Head of caudate nucleus (tissue), 42 donors: ENCODE measurements at regions of chr1 and their contacts with region 1.

Region 1: DNA sequence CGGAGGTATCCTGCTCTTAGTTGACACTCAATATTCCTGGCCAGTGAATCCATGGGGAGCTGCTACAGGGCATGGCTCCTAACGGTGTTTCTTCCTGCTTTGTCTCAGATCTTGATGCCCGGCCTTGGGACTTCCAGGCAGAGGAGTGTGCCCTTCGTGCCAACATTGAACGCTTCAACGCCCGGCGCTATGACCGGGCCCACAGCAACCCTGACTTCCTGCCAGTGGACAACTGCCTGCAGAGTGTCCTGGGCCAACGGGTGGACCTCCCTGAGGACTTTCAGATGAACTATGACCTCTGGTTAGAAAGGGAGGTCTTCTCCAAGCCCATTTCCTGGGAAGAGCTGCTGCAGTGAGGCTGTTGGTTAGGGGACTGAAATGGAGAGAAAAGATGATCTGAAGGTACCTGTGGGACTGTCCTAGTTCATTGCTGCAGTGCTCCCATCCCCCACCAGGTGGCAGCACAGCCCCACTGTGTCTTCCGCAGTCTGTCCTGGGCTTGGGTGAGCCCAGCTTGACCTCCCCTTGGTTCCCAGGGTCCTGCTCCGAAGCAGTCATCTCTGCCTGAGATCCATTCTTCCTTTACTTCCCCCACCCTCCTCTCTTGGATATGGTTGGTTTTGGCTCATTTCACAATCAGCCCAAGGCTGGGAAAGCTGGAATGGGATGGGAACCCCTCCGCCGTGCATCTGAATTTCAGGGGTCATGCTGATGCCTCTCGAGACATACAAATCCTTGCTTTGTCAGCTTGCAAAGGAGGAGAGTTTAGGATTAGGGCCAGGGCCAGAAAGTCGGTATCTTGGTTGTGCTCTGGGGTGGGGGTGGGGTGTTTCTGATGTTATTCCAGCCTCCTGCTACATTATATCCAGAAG is 16.7 kb downstream of the ALX3 start:
- DNase-seq: peak; percentile 31 to 92 (median 80)

Region 2: GRCh38 chr1:110102081-110102480 is 48.3 kb after region 1 on chr1:
- intact Hi-C with region 1: loop called (anchors 5 kb)
- DNase-seq: no peak

Region 3: DNA sequence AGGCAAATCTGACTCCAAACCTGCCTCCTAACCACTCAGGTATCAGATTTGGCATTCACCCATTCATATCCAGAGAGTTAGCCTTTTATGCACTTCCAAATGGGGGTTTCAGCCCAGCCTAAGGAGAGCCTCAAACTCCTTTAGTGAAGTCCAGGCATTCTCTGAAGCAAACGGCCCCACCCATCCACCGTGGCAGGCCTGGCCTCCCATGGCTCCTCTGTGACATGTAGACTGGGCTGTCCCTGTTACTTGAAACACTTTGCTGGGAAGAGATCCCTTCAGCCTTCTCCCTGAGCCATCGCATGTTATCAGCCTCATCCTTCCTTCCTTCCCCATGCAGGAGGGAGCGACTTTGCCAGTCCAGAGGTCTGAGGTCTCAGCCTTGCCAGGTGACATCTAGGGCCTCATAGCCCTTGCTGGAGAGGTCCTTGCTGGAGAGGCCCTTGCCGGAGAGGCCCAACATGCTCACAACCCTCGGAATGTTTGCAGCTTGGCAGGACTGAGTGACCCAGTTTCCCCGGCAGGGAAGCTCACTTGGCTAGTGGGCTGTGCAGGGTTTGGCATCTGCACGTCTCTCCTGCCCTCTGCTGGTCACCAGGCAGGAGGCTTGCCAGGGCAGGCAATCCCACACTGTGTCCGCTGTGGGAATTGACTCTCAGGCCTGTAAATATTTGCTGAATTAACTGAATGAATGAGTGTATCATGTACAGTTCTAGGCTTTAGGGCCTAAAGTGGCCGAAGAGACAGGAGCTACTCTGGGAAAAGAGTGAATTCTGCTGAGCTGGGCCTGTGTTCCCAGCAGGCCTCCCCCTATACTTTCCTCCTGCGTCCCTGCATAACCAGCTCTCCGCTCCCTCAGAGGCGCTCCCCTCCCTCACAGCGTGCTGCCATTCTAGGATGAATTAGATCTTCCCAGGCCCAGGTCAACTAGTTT is 258.7 kb after region 1 on chr1:
- intact Hi-C with region 1: no loop called
- DNase-seq: peak; percentile 64 to 93 (median 84)

Region 4: GRCh38 chr1:110338886-110339406 is 285.2 kb after region 1 on chr1 and contains the start of gene RBM15:
- intact Hi-C with region 1: loop called (anchors 10 kb)
- DNase-seq: peak; percentile 92 to 100 (median 98)